ENCODE measurements at regions of chr1 and their contacts with region 1.

Region 1: DNA sequence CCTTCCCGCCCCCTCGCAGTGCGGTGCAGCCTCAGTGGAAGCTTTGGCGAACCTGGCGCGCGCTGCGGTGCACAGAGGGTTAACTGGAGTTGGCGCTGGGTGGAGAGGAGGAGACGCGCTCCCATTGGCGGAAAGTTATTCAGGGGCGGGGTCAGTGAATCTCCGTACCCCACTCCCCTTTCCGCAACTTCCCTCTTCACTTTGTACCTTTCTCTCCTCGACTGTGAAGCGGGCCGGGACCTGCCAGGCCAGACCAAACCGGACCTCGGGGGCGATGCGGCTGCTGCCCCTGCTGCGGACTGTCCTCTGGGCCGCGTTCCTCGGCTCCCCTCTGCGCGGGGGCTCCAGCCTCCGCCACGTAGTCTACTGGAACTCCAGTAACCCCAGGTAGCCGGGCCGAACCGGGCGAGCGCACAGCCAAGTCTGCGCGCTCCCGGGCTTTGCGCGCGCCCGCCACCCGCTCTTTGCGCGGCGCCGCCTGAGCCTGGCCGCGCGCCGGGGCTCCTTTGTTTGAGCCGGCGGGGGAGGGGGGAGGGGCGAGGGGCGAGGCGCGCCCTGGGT is at the start of gene EFNA4:
- DNase-seq: peak in 1 of 2 experiments; percentile 94
- H3K4me3 ChIP-seq: peak within 1 kb of the TSS; percentile 63 to 85 (median 82)
- H3K27ac ChIP-seq: peak within 1 kb of the TSS; percentile 77; the same call in 1 of the 2 replicates
- H3K4me1 ChIP-seq: peaks cover 0 to 19% (median 6%) of the 10 kb centered on the region in 4 experiments; a peak in 5 of 7 replicates
- H3K27me3 ChIP-seq: peaks cover 0 to 4% (median 1%) of the 10 kb centered on the region in 4 experiments; a peak in 2 of 7 replicates
- CTCF ChIP-seq: no peak
- EP300 ChIP-seq: no peak
- POLR2A ChIP-seq: peak in 1 of 2 experiments; percentile 78; a peak in 2 of 3 replicates
- RAD21 ChIP-seq: no peak
- total RNA-seq, gene EFNA4: 18.5 and 21.9 TPM in 2 replicates

Region 2: GRCh38 chr1:154974063-154974807 is 89.4 kb before region 1 on chr1 and contains the start of gene CKS1B:
- CTCF ChIA-PET with region 1: interaction called, 26 read pairs
- POLR2A ChIA-PET with region 1: interaction called, 5 read pairs
- DNase-seq: peak; percentile 91 to 98
- H3K4me3 ChIP-seq: peak within 1 kb of the TSS; percentile 87 to 99 (median 96)
- H3K27ac ChIP-seq: peak within 1 kb of the TSS; percentile 95
- H3K4me1 ChIP-seq: peaks cover 3 to 13% (median 11%) of the 10 kb centered on the region in 4 experiments; a peak in 6 of 7 replicates
- H3K27me3 ChIP-seq: no peaks in the 10 kb centered on the region
- CTCF ChIP-seq: no peak
- EP300 ChIP-seq: no peak
- POLR2A ChIP-seq: peak; percentile 46 to 82
- RAD21 ChIP-seq: no peak
- total RNA-seq, gene CKS1B: 284 and 294 TPM in 2 replicates

Region 3: DNA sequence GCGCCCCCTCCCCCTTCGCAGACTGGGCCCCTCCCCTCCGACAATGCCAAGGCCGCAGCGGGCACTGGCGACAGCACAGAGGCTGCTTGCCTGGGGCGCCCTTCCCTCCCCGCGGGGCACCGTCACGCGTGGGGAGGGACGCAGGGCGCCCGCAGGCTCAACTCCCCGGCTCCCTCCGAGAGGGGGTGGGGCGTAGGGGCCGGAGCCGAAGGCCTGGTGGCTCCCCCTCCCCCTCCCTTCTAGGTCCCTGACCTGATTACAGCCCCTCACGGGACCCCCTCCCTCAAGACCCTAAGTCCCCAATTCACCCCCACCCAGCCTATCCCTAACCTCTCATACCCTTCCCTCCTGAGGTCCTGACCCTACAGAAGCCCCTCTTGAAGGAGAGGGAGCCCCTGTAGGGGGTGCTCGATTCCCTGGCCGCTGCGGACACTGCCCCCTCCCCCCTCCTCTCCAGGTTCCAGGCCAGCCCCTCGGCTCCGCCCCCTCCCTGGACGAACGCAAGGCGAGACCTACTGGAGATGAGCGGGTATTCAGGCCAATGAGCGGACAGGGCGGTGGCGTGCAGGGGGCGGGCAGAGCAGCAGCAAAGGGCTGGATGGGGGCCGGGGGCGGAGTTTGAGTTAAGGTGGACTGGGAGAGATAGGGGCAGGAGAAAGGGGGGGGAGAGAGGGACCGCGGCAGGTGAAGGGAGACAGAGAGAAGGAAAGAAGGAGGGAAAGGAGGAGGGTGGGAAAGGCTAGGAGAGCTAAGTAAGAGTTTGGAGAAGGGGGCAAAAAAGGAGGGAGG is 61.8 kb before region 1 on chr1:
- CTCF ChIA-PET with region 1: interaction called, 112 read pairs
- POLR2A ChIA-PET with region 1: interaction called, 4 read pairs
- DNase-seq: peak; percentile 97 to 99
- H3K4me3 ChIP-seq: peak overlapping the region; percentile 62 to 87 (median 70)
- H3K27ac ChIP-seq: no peak overlapping the region; the same call in 1 of the 2 replicates
- H3K4me1 ChIP-seq: peaks cover 6 to 18% (median 14%) of the 10 kb centered on the region in 4 experiments
- H3K27me3 ChIP-seq: no peaks in the 10 kb centered on the region
- CTCF ChIP-seq: peak in 2 of 3 experiments; percentile 20 to 29; a peak in 2 of 4 replicates
- EP300 ChIP-seq: no peak; a peak in 1 of 3 replicates
- POLR2A ChIP-seq: no peak
- RAD21 ChIP-seq: peak; percentile 0 to 42; a peak in 3 of 4 replicates

Region 4: DNA sequence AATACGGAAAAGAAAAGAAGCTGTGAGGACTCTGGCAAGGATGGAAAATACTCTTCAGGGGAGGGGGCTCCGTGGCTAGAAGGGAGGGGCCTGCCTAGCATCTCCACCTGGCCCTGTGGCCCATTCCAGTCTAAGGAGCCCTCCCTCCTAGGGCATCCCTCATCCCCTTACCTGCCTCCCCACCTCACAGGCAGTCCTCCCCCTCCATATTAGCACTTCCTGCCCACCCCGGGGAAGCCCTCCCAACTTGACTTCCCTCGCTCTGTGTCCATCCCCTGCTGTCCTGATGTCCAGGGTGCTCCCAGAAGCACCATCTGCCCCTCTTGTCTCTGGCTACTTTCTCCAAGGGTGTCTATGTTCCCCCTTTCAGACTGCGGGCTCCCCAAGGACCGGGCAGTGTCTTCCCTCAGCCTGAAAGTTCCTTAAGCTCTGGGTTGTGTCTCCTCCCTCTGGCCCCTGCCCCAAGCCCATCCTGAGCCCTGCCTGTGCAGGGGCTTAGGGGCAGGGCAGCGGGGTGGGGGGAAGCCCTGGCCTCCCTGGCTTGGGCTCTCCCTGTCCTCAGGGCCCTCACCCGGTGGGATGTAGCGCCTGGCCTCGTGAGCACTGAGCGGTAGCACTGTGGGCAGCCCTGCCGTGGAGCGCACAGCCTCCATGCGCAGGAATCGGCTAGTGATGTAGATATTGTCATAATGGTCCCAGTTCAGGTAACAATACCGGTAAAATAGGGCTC is 34.0 kb before region 1 on chr1:
- CTCF ChIA-PET with region 1: interaction called, 16 read pairs
- POLR2A ChIA-PET with region 1: interaction called, 3 read pairs
- DNase-seq: no peak
- H3K4me3 ChIP-seq: no peak overlapping the region
- H3K27ac ChIP-seq: no peak overlapping the region
- H3K4me1 ChIP-seq: peaks cover 0 to 5% (median 0%) of the 10 kb centered on the region in 4 experiments; a peak in 2 of 7 replicates
- H3K27me3 ChIP-seq: peaks cover 0 to 3% (median 1%) of the 10 kb centered on the region in 4 experiments; a peak in 1 of 7 replicates
- CTCF ChIP-seq: no peak
- EP300 ChIP-seq: no peak
- POLR2A ChIP-seq: no peak
- RAD21 ChIP-seq: no peak

Region 5: DNA sequence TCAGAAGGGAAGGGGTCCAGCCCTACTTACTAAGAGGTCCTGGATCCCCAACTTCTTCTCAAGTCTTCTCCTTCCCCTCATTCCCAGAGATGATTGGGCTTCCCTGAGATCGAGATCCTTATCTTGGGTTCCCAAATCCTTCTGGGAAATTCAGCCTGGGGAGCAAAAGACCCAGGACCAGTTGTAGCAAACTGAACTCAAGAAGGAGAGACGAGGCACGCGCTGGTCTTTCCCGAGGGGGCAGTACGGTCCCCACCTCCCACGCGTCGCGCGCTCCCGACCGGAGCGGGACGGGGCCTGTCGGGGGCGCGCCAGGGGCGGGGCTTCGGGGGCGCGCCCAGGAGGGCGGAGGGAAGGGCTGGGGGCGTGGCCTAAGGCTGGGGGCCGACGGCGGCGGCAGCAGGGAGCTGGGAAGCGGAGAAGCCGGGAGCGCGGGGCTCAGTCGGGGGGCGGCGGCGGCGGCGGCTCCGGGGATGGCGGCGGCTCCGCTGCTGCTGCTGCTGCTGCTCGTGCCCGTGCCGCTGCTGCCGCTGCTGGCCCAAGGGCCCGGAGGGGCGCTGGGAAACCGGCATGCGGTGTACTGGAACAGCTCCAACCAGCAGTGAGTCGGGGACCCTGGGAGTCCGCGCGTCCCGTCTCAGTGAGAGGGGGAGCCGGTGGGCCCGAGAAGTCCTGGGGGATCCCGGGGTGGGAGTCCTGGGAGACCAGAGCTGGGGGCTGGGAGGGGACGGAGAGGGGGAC is 15.0 kb after region 1 on chr1 and contains the start of gene EFNA3:
- CTCF ChIA-PET with region 1: interaction called, 907 read pairs
- POLR2A ChIA-PET with region 1: interaction called, 21 read pairs
- DNase-seq: peak in 1 of 2 experiments; percentile 91
- H3K4me3 ChIP-seq: peak within 1 kb of the TSS; percentile 57 to 77 (median 64)
- H3K27ac ChIP-seq: no peak within 1 kb of the TSS
- H3K4me1 ChIP-seq: peaks cover 0 to 34% (median 16%) of the 10 kb centered on the region in 4 experiments; a peak in 6 of 7 replicates
- H3K27me3 ChIP-seq: peaks cover 45 to 59% (median 56%) of the 10 kb centered on the region in 4 experiments
- CTCF ChIP-seq: 0 out of 4 replicates have a peak, but pooled peaks of 1 of the 3 experiments have one; percentile 4
- EP300 ChIP-seq: no peak
- POLR2A ChIP-seq: no peak
- RAD21 ChIP-seq: no peak
- total RNA-seq, gene EFNA3: 10.8 and 11.6 TPM in 2 replicates

Region 6: GRCh38 chr1:155091071-155091709 is 27.6 kb after region 1 on chr1:
- CTCF ChIA-PET with region 1: interaction called, 169 read pairs
- POLR2A ChIA-PET with region 1: interaction called, 13 read pairs
- DNase-seq: peak; percentile 68 to 97
- H3K4me3 ChIP-seq: 0 out of 8 replicates have a peak overlapping the region, but pooled peaks of 1 of the 4 experiments have one; percentile 28
- H3K27ac ChIP-seq: no peak overlapping the region
- H3K4me1 ChIP-seq: peaks cover 0 to 17% (median 14%) of the 10 kb centered on the region in 4 experiments; a peak in 6 of 7 replicates
- H3K27me3 ChIP-seq: peaks cover 0 to 13% (median 2%) of the 10 kb centered on the region in 4 experiments; a peak in 2 of 7 replicates
- CTCF ChIP-seq: peak in 2 of 3 experiments; percentile 98; a peak in 3 of 4 replicates
- EP300 ChIP-seq: no peak
- POLR2A ChIP-seq: no peak
- RAD21 ChIP-seq: peak; percentile 80 to 87

Region 7: GRCh38 chr1:155172732-155173477 is 109.3 kb after region 1 on chr1 and contains the start of gene KRTCAP2:
- CTCF ChIA-PET with region 1: interaction called, 14 read pairs
- POLR2A ChIA-PET with region 1: interaction called, 4 read pairs
- DNase-seq: peak; percentile 94 to 95
- H3K4me3 ChIP-seq: peak within 1 kb of the TSS; percentile 70 to 95 (median 86)
- H3K27ac ChIP-seq: peak within 1 kb of the TSS; percentile 68
- H3K4me1 ChIP-seq: peaks cover 3 to 23% (median 8%) of the 10 kb centered on the region in 4 experiments; a peak in 6 of 7 replicates
- H3K27me3 ChIP-seq: no peaks in the 10 kb centered on the region
- CTCF ChIP-seq: peak in 2 of 3 experiments; percentile 87 to 99; a peak in 3 of 4 replicates
- EP300 ChIP-seq: no peak; a peak in 1 of 3 replicates
- POLR2A ChIP-seq: peak in 1 of 2 experiments; percentile 74; a peak in 2 of 3 replicates
- RAD21 ChIP-seq: peak; percentile 22 to 44; a peak in 3 of 4 replicates
- total RNA-seq, gene KRTCAP2: 146 TPM in 2 replicates

Measured in H1 (cell line).